K562 (cell line): ENCODE measurements at regions of chr4 and their contacts with region 1.

Region 1: DNA sequence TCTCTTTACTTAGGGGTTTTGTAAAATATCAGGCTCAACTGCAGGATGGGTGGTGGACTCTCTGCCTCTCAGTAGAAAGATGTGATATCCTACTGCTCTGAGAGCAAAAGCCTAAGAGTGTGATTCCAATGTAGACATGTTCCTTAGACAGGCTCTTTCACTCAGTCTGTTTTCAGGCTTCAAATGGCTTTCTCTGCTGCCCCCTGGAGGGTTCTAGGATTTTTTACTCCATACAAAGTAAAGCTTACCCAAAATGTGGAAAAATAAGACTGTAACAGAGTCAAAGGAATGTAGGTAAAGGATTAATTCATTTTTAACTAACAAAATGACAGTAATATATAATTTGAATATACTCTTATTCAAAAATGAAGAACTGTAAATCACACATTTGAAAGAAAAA is 32.1 kb downstream of the ZGRF1 start:
- DNase-seq: peak; percentile 36 to 60 (median 46)
- ATAC-seq: peak; percentile 95
- H3K4me3 ChIP-seq: no peak overlapping the region
- H3K27ac ChIP-seq: no peak overlapping the region
- H3K4me1 ChIP-seq: no peaks in the 10 kb centered on the region; a peak in 1 of 5 replicates
- H3K27me3 ChIP-seq: no peaks in the 10 kb centered on the region
- CTCF ChIP-seq: peak; percentile 53 to 77 (median 64); a peak in 4 of 6 replicates
- EP300 ChIP-seq: no peak
- POLR2A ChIP-seq: no peak
- RAD21 ChIP-seq: peak; percentile 70 to 75

Region 2: DNA sequence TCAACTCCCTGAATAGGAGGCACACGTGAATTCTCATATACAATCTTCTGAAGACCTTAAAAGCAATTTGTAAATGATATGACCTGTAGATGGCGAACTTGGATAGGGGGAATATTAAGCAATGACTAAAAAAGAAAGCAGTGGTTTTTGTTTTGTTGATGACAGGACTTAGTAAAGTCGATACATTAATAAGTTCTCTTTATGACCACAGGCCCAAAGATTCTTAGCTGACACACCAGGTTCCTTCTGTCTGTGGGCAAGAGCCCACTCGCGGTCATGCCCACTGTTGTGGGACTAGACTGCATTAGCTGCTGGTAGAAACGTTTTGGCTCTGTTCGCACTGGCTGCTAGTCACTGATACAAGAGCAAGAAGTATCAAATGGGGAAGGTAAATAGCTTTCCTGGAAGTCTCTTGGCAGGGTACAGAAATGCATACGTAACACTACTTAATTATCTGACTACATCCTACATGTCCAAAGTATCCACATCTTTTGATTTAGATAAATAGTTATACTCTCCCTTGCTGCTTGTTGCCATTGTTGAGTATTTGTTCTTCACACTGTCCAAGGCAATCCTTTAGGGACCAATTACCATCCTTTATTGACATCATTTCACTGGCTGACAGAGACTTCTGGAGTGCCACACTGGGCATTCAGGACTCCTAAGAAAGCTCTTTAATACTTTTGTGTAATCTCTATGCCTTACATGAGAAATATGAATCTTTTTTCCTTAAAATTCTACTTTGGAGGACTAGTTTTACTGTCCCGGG is 276.4 kb before region 1 on chr4:
- CTCF ChIA-PET with region 1: interaction called, 6 read pairs
- POLR2A ChIA-PET with region 1: interaction called, 3 read pairs
- in situ Hi-C with region 1: no loop called
- intact Hi-C with region 1: loop called (anchors 1 kb)
- DNase-seq: peak in 2 of 4 experiments; percentile 8 to 37
- ATAC-seq: peak; percentile 54; the same call in 2 of the 3 replicates
- H3K4me3 ChIP-seq: no peak overlapping the region
- H3K27ac ChIP-seq: no peak overlapping the region
- H3K4me1 ChIP-seq: no peaks in the 10 kb centered on the region
- H3K27me3 ChIP-seq: no peaks in the 10 kb centered on the region
- CTCF ChIP-seq: peak; percentile 24 to 62 (median 34); a peak in 3 of 6 replicates
- EP300 ChIP-seq: no peak
- POLR2A ChIP-seq: no peak
- RAD21 ChIP-seq: peak; percentile 44 to 51

Region 3: DNA sequence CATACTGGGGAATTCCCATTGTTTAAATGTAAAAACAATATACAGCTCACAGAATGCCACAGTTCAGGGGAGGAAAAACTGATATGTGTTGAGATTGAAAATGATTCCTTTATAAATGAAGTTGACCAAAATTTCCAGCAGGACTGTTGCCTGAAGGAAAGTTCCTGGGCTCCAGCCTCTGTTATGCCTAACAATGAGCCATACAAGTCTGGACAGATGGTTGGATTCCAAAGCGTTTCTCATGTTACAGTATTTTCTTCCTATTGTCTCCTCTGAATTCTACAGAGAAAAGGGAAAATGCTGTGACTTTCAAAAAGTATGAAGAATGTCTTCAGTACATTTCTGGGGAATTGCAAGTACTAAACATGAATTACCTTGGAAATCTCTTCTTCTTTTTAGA is 234.1 kb before region 1 on chr4:
- CTCF ChIA-PET with region 1: no interaction called
- POLR2A ChIA-PET with region 1: no interaction called
- in situ Hi-C with region 1: no loop called
- intact Hi-C with region 1: no loop called
- DNase-seq: no peak
- ATAC-seq: no peak
- H3K4me3 ChIP-seq: no peak overlapping the region
- H3K27ac ChIP-seq: no peak overlapping the region
- H3K4me1 ChIP-seq: no peaks in the 10 kb centered on the region
- H3K27me3 ChIP-seq: no peaks in the 10 kb centered on the region; a peak in 1 of 5 replicates
- CTCF ChIP-seq: no peak
- EP300 ChIP-seq: no peak
- POLR2A ChIP-seq: no peak
- RAD21 ChIP-seq: no peak

Region 4: DNA sequence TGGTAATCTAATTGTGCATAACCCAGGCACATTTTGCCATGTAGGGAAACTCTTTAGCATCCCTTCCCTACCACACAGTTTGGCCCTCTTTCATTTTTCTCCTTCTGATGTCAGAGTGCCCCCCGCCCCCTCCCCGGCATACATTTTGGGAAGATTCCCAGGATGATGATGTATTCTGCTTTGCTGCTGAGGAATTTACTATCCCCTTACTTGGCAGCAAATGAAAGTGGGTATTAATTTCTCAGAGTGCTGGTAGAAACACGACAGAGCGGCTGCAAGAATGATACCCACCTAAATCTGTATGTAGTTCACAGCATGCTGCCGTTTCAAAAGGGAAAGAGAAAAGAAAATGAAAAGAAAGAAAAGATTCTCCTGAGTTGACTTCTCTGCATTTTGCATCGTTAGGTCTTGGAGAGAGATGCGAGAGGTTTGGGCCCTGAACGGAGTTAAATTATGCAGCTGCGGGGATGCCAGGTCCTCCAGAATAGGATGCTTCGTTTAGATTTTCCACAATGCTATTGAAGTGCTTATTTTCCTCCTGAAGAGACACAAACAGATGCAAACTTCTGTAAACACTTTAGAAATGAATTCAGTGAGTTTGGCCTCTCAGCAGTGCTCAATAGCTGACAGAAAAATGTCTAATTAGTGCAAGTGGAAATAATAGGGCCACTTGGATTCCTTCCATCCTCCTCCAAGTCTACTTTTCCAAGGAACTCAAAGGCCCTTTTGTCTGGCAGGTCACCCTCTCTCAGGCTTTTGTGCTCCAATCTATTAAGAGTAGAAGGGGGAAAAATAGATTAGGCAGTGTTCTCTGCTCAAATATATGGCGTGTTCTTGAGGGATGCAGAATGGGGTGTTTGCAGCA is 201.3 kb before region 1 on chr4:
- CTCF ChIA-PET with region 1: no interaction called
- POLR2A ChIA-PET with region 1: no interaction called
- in situ Hi-C with region 1: no loop called
- intact Hi-C with region 1: loop called (anchors 10 kb)
- DNase-seq: no peak
- ATAC-seq: no peak
- H3K4me3 ChIP-seq: no peak overlapping the region
- H3K27ac ChIP-seq: no peak overlapping the region
- H3K4me1 ChIP-seq: no peaks in the 10 kb centered on the region
- H3K27me3 ChIP-seq: peaks cover 0 to 3% of the 10 kb centered on the region in 2 experiments; a peak in 3 of 5 replicates
- CTCF ChIP-seq: no peak
- EP300 ChIP-seq: no peak
- POLR2A ChIP-seq: no peak
- RAD21 ChIP-seq: no peak

Region 5: GRCh38 chr4:112448306-112449132 is 156.1 kb before region 1 on chr4:
- CTCF ChIA-PET with region 1: no interaction called
- POLR2A ChIA-PET with region 1: no interaction called
- in situ Hi-C with region 1: no loop called
- intact Hi-C with region 1: no loop called
- DNase-seq: no peak
- ATAC-seq: no peak
- H3K4me3 ChIP-seq: no peak overlapping the region
- H3K27ac ChIP-seq: no peak overlapping the region
- H3K4me1 ChIP-seq: no peaks in the 10 kb centered on the region
- H3K27me3 ChIP-seq: no peaks in the 10 kb centered on the region
- CTCF ChIP-seq: no peak
- EP300 ChIP-seq: no peak
- POLR2A ChIP-seq: no peak
- RAD21 ChIP-seq: no peak

Region 6: GRCh38 chr4:112647785-112648184 is 43.2 kb after region 1 on chr4:
- CTCF ChIA-PET with region 1: no interaction called
- POLR2A ChIA-PET with region 1: no interaction called
- in situ Hi-C with region 1: no loop called
- intact Hi-C with region 1: no loop called
- DNase-seq: no peak
- ATAC-seq: no peak
- H3K4me3 ChIP-seq: no peak overlapping the region
- H3K27ac ChIP-seq: no peak overlapping the region
- H3K4me1 ChIP-seq: no peaks in the 10 kb centered on the region
- H3K27me3 ChIP-seq: no peaks in the 10 kb centered on the region
- CTCF ChIP-seq: no peak
- EP300 ChIP-seq: no peak
- POLR2A ChIP-seq: no peak
- RAD21 ChIP-seq: no peak